ENCODE measurements at regions of chr18 and their contacts with region 1.

Region 1: DNA sequence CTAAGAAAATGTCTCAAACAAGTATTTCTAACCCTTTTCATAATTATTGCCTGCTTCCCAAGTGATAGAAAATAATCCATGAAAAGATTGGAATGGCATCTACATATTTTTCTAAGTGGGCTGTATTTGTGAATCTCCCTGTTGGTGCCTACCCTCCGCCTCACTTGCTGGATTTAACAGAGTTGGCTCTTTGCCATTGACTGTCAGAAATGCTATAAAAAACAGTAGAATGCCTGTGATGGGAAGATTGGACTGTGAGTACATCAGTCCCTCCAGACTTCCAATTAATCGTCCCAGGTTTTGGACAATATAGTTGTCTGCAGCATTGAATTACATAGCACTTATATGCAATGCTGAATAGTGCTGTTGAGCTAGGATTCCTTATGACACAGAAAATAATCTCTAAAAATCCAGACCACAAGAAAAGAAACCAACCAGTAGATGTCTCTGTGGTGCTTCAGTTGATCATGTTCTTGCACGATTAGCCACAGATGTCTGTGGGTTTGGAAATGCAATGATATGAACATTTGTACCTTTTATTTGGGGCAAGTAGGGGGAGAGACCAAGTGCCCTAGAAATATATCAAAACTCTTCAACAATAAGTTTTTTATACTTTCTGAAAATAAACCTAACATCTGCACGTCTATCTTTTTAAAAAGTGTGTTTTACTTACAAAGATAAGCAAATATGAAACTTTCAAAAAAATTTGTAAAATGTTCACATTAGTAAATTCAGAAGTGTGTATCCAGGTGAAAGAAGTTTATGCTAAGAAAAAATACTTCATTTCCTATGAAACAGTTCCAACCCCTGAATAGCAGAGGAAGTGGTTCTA is 88.5 kb downstream of the DYNAP start:
- DNase-seq: no peak
- ATAC-seq: no peak
- H3K4me3 Mint-ChIP-seq: no peak overlapping the region
- H3K27ac Mint-ChIP-seq: no peak overlapping the region
- H3K4me1 Mint-ChIP-seq: peaks cover 4% of the 10 kb centered on the region
- H3K27me3 Mint-ChIP-seq: peaks cover 19% of the 10 kb centered on the region

Region 2: GRCh38 chr18:54532217-54532616 is 147.3 kb before region 1 on chr18:
- CTCF ChIA-PET with region 1: no interaction called
- POLR2A ChIA-PET with region 1: no interaction called
- DNase-seq: no peak
- ATAC-seq: no peak
- H3K4me3 Mint-ChIP-seq: no peak overlapping the region
- H3K27ac Mint-ChIP-seq: no peak overlapping the region
- H3K4me1 Mint-ChIP-seq: no peaks in the 10 kb centered on the region
- H3K27me3 Mint-ChIP-seq: no peaks in the 10 kb centered on the region

Region 3: DNA sequence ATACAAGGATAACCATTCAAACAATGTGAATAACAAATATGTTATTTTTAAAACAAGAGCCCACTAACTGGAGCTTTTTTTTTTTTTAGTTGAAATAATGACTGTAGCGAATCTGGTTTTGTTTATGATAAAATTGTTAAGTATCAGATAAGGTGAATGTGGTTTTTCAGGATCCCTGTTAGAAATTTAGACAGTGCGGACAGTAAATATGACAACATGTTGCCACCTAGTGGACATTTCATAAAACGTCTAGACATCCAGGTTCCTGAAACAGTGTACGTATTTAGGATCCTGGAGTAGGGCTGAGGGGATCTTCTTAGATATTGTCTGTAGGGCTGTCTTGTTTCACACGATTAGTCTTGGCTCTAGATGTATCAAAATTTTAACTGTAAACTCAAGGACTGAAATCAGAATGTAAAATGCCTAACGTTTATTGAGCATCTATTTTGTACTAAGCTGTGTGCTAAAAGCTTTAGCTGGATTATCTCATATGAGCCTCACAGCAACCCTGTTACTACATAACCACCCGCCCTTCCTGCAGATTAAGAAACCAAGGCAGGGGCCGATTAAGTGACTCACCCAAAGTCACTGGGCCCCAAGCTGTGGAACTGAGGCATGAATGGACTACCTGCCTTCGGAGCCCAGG is 303.6 kb after region 1 on chr18:
- CTCF ChIA-PET with region 1: interaction called, 17 read pairs
- POLR2A ChIA-PET with region 1: no interaction called
- DNase-seq: peak; percentile 26
- ATAC-seq: no peak
- H3K4me3 Mint-ChIP-seq: no peak overlapping the region
- H3K27ac Mint-ChIP-seq: no peak overlapping the region
- H3K4me1 Mint-ChIP-seq: no peaks in the 10 kb centered on the region
- H3K27me3 Mint-ChIP-seq: peaks cover 4% of the 10 kb centered on the region